AG04450 (cell line): ENCODE measurements at regions of chr9 and their contacts with region 1.

Region 1: DNA sequence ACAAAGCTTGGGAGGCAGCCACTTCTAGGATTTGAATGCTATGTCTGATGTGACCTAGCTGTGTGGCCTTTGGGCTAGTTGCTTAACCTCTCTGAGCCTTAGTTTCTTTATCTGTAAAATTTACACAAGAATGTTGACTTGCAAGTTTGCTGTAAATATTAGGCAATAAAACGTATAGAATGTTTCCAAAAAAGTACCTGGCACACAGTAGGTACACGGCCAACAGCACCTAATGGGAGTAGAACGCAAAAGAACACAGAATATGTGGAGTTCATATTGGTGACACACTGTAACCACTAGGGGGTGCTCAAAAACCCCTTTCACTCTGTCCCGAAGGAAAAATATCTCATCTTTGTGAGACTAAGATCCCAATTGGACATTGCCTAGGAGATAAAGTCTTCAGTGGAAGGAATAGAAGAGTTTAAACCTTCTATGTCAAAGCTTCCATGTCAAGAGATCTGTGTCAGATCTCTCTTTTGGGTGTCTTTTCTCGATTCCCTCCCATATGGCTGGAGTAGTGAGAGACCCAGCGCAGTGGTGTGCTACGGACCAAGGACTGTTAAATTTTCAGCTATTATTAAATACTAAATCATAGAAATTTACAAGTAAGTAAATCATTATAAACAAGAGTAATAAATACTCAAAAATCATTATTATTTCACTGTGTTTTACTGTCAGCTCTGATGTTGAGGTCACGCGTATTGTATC is 145.4 kb upstream of the RAD23B start:
- DNase-seq: no peak
- H3K4me3 ChIP-seq: no peak overlapping the region
- H3K27ac ChIP-seq: no peak overlapping the region
- H3K27me3 ChIP-seq: peaks cover 9% of the 10 kb centered on the region
- CTCF ChIP-seq: peak; percentile 79

Region 2: DNA sequence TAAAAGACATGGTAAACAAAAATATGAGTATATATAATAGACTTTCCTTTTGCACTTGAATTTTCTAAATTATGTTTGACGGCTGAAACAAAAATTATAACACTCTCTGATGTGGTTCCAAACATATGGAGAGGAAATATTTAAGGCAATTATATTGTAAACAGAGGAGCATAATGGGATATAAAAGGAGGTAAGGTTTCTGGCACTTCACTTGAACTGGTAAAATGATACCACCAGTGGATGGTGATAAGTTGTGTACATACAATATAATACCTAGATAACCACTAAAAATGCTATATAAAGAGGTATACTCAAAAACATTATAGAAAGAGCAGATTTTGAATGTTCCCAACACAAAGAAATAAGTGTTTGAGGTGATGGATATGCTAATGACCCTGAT is 47.4 kb before region 1 on chr9:
- CTCF ChIA-PET with region 1: no interaction called
- POLR2A ChIA-PET with region 1: no interaction called
- DNase-seq: no peak
- H3K4me3 ChIP-seq: no peak overlapping the region
- H3K27ac ChIP-seq: no peak overlapping the region
- H3K27me3 ChIP-seq: peaks cover 2% of the 10 kb centered on the region
- CTCF ChIP-seq: no peak

Region 3: GRCh38 chr9:107153336-107153735 is 15.7 kb after region 1 on chr9:
- CTCF ChIA-PET with region 1: interaction called, 25 read pairs
- POLR2A ChIA-PET with region 1: no interaction called
- DNase-seq: no peak
- H3K4me3 ChIP-seq: no peak overlapping the region
- H3K27ac ChIP-seq: no peak overlapping the region
- H3K27me3 ChIP-seq: peaks cover 5% of the 10 kb centered on the region
- CTCF ChIP-seq: no peak

Region 4: DNA sequence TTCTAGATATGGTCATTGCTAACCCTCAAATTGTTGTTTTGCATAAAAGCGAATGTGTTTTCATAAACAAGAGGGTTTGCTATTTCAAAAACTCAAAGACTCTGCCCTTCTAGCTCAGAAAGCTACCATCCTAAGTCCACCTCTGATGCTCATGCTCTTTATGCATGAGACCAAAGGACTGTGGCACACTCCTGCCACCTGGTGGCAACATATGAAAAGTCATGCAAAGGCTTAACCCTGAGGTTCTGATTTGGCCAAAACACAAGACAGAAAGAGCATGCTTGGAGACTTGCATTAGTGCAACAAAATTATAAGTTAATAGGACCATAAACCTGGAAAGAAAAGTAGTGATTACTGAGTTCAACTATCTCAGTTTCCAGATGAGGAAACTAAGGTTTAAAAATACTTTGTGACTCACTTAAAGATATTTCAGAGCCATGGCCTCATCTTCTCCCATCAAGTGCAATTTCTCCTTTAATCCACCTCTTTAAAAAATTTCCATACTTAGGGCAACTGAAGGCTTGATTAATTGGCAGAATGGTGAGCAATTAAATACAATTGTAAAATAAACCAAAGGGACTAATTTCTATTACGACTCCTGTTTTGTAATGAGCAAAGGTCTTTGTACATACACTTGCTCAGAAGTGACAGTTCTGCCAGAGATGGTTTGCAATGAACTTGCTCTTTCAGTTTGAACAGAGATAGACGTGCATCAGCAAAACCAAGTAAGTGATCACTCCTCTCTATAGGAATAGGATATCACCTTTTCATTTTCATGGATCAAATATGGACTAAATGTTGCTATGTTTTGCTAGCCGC is 34.7 kb after region 1 on chr9:
- CTCF ChIA-PET with region 1: interaction called, 36 read pairs
- POLR2A ChIA-PET with region 1: no interaction called
- DNase-seq: peak; percentile 65
- H3K4me3 ChIP-seq: no peak overlapping the region
- H3K27ac ChIP-seq: no peak overlapping the region
- H3K27me3 ChIP-seq: no peaks in the 10 kb centered on the region
- CTCF ChIP-seq: peak; percentile 96